ENCODE measurements at regions of chr6 and their contacts with region 1.

Region 1: GRCh38 chr6:36759148-36759759 is 61.6 kb downstream of the RAB44 start:
- DNase-seq: peak; percentile 89
- ATAC-seq: peak; percentile 93

Region 2: GRCh38 chr6:36514554-36515456 is 244.4 kb before region 1 on chr6:
- intact Hi-C with region 1: no loop called
- DNase-seq: no peak
- ATAC-seq: peak; percentile 36

Region 3: GRCh38 chr6:36615018-36615761 is 144.1 kb before region 1 on chr6:
- intact Hi-C with region 1: loop called (anchors 10 kb)
- DNase-seq: no peak
- ATAC-seq: peak; percentile 80